Activated CD4-positive, alpha-beta memory T cell treated with anti-CD3 and anti-CD28 coated beads for 36 hours (primary cell): ENCODE measurements at regions of chr3 and their contacts with region 1.

Region 1: DNA sequence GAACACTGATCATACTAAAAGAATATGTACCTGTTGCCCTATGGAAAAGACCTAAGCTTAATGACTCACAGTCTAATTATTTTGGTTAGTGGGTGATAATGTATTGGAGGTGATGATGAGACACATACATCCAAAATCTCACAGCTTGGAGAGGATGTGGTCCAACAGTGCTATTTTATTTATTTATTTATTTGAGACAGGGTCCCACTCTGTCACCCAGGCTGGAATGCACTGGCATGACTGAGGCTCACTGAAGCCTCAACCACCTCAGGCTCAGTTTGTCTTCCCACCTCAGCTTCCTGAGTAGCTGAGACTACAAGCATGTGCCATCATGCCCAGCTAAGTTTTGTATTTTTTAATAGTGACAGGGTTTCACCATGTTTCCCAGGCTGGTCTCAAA is 35.0 kb downstream of the LPP start:
- DNase-seq: no peak
- H3K4me3 Mint-ChIP-seq: no peak overlapping the region
- H3K27ac Mint-ChIP-seq: no peak overlapping the region
- H3K4me1 Mint-ChIP-seq: peaks cover 46% of the 10 kb centered on the region
- H3K27me3 Mint-ChIP-seq: no peaks in the 10 kb centered on the region

Region 2: GRCh38 chr3:188067932-188068331 is 121.0 kb before region 1 on chr3:
- CTCF ChIA-PET with region 1: no interaction called
- POLR2A ChIA-PET with region 1: no interaction called
- intact Hi-C with region 1: no loop called
- DNase-seq: no peak
- H3K4me3 Mint-ChIP-seq: no peak overlapping the region
- H3K27ac Mint-ChIP-seq: no peak overlapping the region
- H3K4me1 Mint-ChIP-seq: peaks cover 12% of the 10 kb centered on the region
- H3K27me3 Mint-ChIP-seq: no peaks in the 10 kb centered on the region

Region 3: DNA sequence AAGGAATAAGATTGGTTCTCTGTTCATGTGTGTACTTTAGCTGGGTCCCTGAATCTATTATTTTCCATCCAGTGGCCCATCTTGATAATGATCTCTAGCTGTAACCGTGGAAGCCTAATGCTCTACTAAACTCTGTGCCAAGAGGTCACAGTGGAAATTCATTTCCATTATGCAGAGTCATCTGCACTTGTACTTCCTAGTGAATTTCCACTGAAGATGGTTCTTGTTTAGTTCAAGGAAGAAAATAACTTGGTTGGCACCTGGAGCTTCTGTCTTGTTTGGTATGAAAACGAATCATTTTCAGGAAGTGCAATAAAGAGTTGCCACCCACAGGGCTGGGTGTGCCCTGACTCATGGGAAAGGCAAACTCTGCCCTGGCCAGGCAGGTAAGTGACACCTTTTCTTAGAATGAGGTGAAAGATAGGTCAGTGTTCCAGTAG is 24.6 kb before region 1 on chr3:
- CTCF ChIA-PET with region 1: no interaction called
- POLR2A ChIA-PET with region 1: no interaction called
- intact Hi-C with region 1: loop called (anchors 2 kb)
- DNase-seq: peak; percentile 59
- H3K4me3 Mint-ChIP-seq: no peak overlapping the region
- H3K27ac Mint-ChIP-seq: peak overlapping the region; percentile 76
- H3K4me1 Mint-ChIP-seq: peaks cover 62% of the 10 kb centered on the region
- H3K27me3 Mint-ChIP-seq: no peaks in the 10 kb centered on the region

Region 4: DNA sequence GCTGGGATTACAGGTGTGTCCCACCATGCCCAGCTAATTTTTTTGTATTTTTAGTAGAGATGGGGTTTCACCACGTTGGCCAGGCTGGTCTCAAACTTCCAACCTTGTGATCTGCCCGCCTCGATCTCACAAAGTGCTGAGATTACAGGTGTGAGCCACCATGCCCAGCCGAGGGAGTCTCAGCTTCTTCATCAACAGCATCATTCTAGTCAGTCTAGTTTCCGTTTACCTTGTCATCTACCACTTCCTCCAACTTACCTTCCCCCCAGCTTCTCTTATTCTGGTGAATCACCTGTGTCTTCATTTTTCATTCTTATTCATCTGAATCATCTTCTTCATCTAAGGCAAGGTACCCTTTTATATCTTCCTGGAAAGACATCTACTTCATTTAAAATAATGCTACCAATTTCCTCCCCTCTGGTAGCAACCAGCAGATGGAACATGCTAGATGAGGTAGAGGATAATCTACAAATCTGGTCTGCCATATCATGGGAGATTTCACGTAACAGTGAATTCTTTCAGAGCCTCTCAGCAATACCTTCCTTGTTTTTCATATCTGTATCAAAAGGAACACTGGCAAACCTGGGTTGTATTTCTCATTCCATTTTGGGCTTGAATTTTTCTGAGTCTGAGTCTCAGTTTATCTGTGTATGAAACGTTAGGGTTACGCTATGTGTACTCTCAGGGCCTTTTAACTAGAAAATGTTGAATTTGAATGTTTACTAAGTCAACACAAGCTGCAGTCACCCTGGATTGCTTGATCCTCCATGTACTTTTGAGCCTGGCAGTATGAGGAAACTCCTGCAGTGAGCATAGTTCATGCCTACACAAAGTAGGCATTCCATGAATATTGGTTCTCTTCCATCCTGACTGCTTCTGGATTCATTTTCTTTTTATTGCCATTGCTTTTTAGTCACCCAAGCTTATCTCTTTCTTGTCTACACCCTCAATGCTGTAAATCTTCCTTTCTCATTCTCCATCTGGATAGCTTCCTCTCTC is 18.2 kb before region 1 on chr3:
- CTCF ChIA-PET with region 1: no interaction called
- POLR2A ChIA-PET with region 1: no interaction called
- intact Hi-C with region 1: loop called (anchors 2 kb)
- DNase-seq: peak; percentile 82
- H3K4me3 Mint-ChIP-seq: peak overlapping the region; percentile 28
- H3K27ac Mint-ChIP-seq: peak overlapping the region; percentile 89
- H3K4me1 Mint-ChIP-seq: peaks cover 58% of the 10 kb centered on the region
- H3K27me3 Mint-ChIP-seq: no peaks in the 10 kb centered on the region

Region 5: GRCh38 chr3:188205992-188206416 is 17.1 kb after region 1 on chr3:
- CTCF ChIA-PET with region 1: no interaction called
- POLR2A ChIA-PET with region 1: no interaction called
- intact Hi-C with region 1: no loop called
- DNase-seq: no peak
- H3K4me3 Mint-ChIP-seq: no peak overlapping the region
- H3K27ac Mint-ChIP-seq: no peak overlapping the region
- H3K4me1 Mint-ChIP-seq: peaks cover 4% of the 10 kb centered on the region
- H3K27me3 Mint-ChIP-seq: no peaks in the 10 kb centered on the region